ENCODE measurements at regions of chr16 and their contacts with region 1.

Region 1: GRCh38 chr16:22077700-22078313 is 14.5 kb upstream of the VWA3A start:
- DNase-seq: peak; percentile 66
- ATAC-seq: peak; percentile 58
- H3K4me3 ChIP-seq: no peak overlapping the region
- H3K27ac ChIP-seq: no peak overlapping the region
- H3K4me1 ChIP-seq: peaks cover 18% of the 10 kb centered on the region
- H3K27me3 ChIP-seq: no peaks in the 10 kb centered on the region
- CTCF ChIP-seq: peak; percentile 84

Region 2: DNA sequence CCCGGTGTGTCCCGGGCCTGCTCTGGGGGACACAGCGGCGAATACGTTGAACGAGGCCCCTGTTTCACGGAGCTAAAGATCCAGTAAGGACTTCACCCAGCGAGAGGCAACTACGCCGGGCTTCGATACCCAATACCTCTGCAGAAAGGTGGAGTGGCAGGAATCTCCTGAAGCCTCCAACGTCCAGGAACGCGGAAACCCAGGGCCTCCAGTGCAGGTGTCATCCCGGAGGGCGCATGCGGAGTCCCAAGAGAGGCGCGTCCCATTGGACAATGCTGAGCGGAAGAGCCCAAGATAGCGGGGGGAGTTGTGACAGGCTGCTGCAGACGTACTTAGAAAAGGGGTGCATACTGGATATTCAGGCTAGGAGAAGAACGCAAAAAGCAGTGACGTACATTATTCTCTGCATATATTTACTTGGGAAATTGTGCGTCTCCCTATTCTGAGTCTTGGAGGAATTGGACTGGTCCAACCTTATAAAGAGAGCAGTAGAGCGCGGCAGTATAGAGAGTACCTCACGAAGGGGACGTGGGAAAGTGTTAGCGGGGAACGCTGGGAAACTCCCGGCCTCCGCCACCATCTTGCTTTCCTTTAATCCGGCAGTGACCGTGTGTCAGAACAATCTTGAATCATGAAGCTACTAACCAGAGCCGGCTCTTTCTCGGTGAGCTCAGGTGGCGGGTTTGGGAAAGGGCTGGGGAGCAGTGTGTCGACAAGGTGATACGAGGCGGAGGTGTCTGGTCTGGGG is 124.8 kb before region 1 on chr16 and contains the start of gene UQCRC2:
- CTCF ChIA-PET with region 1: interaction called, 15 read pairs
- POLR2A ChIA-PET with region 1: no interaction called
- intact Hi-C with region 1: loop called (anchors 5 kb)
- DNase-seq: peak; percentile 86
- ATAC-seq: peak; percentile 93
- H3K4me3 ChIP-seq: peak within 1 kb of the TSS; percentile 96
- H3K27ac ChIP-seq: peak within 1 kb of the TSS; percentile 81
- H3K4me1 ChIP-seq: peaks cover 16% of the 10 kb centered on the region
- H3K27me3 ChIP-seq: no peaks in the 10 kb centered on the region
- CTCF ChIP-seq: no peak
- total RNA-seq, gene UQCRC2: 73.5 and 116 TPM in 2 replicates

Region 3: DNA sequence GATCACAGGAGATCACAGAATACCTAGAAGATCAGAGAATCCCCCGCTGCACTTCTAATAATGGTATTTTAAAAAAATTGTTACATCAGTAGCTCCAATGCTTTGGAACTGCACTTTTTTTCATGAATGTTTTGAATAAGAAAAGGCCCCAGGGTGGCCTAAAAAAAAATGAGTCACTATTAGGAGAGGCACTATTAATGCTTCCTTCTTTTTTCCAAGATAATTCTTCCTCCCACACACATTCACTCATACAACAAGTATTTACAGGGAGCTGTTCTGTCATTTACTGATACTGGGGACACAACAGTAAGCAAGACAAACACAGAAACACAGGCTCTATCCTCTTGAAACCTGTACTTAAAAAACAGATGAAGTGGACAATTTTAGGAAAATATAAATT is 76.2 kb before region 1 on chr16:
- CTCF ChIA-PET with region 1: interaction called, 32 read pairs
- POLR2A ChIA-PET with region 1: no interaction called
- intact Hi-C with region 1: loop called (anchors 1 kb)
- DNase-seq: peak; percentile 82
- ATAC-seq: peak; percentile 73
- H3K4me3 ChIP-seq: peak overlapping the region; percentile 58; the same call in 1 of the 2 replicates
- H3K27ac ChIP-seq: peak overlapping the region; percentile 95
- H3K4me1 ChIP-seq: peaks cover 30% of the 10 kb centered on the region
- H3K27me3 ChIP-seq: no peaks in the 10 kb centered on the region
- CTCF ChIP-seq: no peak

Region 4: GRCh38 chr16:22023505-22023904 is 54.3 kb before region 1 on chr16:
- CTCF ChIA-PET with region 1: interaction called, 14 read pairs
- POLR2A ChIA-PET with region 1: no interaction called
- intact Hi-C with region 1: loop called (anchors 2 kb)
- DNase-seq: no peak
- ATAC-seq: no peak
- H3K4me3 ChIP-seq: no peak overlapping the region
- H3K27ac ChIP-seq: no peak overlapping the region
- H3K4me1 ChIP-seq: peaks cover 49% of the 10 kb centered on the region
- H3K27me3 ChIP-seq: no peaks in the 10 kb centered on the region
- CTCF ChIP-seq: no peak

Region 5: DNA sequence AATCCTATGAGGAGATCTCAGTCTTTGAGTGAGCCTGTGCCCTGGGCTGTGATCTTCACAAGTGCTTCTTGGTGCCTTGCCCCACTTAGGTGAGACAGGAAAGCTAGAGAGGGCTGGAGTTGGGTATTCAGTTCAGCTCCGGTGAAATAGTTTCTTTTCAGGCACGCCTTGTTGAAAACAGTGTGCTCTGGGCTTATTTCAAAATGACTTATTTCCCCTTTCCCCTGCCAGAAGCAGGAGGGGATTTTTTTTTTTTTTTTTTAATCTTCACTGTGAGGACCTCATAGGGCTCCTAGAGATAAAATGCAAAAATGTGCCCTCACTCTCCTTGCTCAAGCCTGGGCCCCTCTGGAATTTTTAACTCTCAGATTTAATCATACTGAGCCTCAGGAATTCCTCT is 42.7 kb before region 1 on chr16:
- CTCF ChIA-PET with region 1: no interaction called
- POLR2A ChIA-PET with region 1: no interaction called
- intact Hi-C with region 1: loop called (anchors 5 kb)
- DNase-seq: no peak
- ATAC-seq: no peak
- H3K4me3 ChIP-seq: no peak overlapping the region
- H3K27ac ChIP-seq: no peak overlapping the region
- H3K4me1 ChIP-seq: peaks cover 2% of the 10 kb centered on the region
- H3K27me3 ChIP-seq: no peaks in the 10 kb centered on the region
- CTCF ChIP-seq: no peak

Measured in PC-3 (cell line).